Ovary (tissue), 10 donors: ENCODE measurements at regions of chr2 and their contacts with region 1.

Region 1: GRCh38 chr2:23675506-23675905 is 251.4 kb downstream of the ATAD2B start:
- DNase-seq: no peak
- H3K4me3 ChIP-seq: no peak overlapping the region
- H3K27ac ChIP-seq: no peak overlapping the region
- H3K4me1 ChIP-seq: no peaks in the 10 kb centered on the region
- H3K27me3 ChIP-seq: no peaks in the 10 kb centered on the region
- CTCF ChIP-seq: no peak
- EP300 ChIP-seq: no peak
- POLR2A ChIP-seq: no peak

Region 2: DNA sequence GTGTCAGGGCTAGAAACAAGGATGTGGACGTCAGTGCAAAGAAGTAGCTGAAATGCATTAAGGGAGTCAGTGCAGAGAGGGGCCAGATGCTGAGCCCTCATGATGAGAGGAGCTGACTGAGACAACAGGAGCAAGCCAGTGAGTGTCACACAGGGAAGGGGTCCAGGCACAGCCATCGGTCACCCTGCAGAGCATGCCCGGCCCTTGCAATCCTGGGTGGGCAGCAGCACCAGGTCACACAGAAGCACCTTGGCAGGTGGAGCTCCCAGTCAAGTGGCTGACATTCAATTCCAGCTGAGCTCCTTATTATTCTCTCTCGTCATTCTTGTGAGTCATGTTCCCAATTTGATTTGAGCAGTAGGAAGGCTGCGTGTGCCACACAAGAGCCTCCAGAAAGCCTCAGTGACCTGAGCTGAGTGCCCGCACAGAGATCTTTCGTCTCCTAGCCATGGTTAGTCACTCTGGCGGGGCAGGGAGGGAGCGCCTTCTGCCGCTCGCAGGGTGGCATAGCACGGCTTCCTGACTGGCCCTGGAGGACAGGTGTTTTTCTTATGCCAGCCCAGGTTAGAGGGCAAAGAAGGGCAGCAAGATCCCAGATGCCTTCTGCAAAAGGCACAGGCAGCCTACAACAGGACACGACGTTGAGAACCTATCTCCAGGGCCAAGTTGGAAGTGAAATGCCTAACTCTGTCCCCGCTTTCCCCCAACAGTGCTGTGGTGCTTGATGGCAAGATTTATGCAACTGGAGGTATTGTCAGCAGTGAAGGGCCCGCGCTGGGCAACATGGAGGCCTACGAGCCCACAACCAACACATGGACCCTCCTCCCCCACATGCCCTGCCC is 30.5 kb after region 1 on chr2:
- intact Hi-C with region 1: loop called in 1 of 4 experiments (anchors 1 kb)
- DNase-seq: peak in 2 of 5 donors; percentile 5 to 11
- H3K4me3 ChIP-seq: no peak overlapping the region
- H3K27ac ChIP-seq: no peak overlapping the region
- H3K4me1 ChIP-seq: peaks cover 8% of the 10 kb centered on the region
- H3K27me3 ChIP-seq: no peaks in the 10 kb centered on the region
- CTCF ChIP-seq: no peak
- EP300 ChIP-seq: no peak
- POLR2A ChIP-seq: no peak